ENCODE measurements at regions of chr5 and their contacts with region 1.

Region 1: DNA sequence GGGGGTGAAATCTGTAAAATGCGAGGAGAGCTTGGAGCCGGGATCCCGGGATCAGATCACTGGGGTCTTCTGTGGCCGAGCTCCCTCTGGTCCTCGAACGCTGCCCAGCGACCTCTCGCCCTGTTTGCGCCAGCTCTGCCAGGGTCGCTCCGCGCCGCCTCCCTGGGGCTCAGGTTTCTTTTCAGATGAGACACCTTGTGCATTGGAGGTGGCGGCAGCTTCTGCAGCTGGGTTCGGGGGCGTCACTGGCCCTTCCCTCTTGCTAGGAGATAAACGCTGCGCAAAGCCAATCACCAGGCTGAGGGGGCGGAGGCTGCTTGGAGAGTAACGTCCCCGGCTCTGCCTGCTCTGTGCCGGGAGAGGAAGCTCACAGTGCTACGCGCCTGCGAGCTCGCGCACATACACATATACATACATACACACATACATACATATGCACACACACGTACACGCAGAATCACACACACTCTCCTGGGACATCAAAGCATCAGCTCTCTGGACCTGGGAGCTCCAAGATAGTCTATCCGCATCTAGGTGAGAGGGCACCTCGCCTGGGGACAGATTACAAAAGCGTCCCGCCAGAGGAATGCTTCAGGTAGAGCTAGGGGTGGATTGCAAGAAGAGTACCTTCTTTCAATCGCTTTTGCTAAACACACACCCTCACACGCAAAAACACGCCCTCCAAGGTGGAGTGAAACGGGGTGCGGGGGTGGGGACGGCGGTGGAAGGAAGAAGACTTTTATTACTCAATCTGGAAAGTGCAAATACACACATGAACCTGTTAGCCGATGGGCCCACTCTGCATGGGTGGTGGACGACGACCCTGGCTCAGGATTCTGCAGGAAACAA is at the start of gene ST8SIA4:
- DNase-seq: peak; percentile 97
- H3K4me3 Mint-ChIP-seq: peak within 1 kb of the TSS; percentile 99
- H3K27ac Mint-ChIP-seq: peak within 1 kb of the TSS; percentile 99
- H3K4me1 Mint-ChIP-seq: peaks cover 52% of the 10 kb centered on the region
- H3K27me3 Mint-ChIP-seq: no peaks in the 10 kb centered on the region

Region 2: DNA sequence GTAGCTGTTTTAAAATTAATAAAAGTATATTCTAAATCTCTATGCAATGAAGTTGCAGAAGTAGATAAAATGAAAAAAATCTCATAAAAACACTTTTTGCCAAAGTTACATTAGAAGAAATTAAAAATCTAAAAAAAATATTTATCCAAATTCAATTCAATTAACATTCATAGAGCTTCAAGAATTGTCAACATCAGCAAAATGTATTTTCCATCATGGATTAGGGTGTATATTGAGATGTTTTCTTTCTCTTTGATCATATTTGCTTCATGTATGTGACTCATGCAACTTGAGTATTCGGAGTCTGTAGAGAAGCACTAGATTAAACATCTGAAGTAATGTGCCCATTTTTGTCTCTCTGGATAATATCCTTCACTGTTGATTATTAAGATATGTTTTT is 783.4 kb before region 1 on chr5:
- CTCF ChIA-PET with region 1: no interaction called
- DNase-seq: no peak
- H3K4me3 Mint-ChIP-seq: no peak overlapping the region
- H3K27ac Mint-ChIP-seq: no peak overlapping the region
- H3K4me1 Mint-ChIP-seq: no peaks in the 10 kb centered on the region
- H3K27me3 Mint-ChIP-seq: no peaks in the 10 kb centered on the region

Region 3: DNA sequence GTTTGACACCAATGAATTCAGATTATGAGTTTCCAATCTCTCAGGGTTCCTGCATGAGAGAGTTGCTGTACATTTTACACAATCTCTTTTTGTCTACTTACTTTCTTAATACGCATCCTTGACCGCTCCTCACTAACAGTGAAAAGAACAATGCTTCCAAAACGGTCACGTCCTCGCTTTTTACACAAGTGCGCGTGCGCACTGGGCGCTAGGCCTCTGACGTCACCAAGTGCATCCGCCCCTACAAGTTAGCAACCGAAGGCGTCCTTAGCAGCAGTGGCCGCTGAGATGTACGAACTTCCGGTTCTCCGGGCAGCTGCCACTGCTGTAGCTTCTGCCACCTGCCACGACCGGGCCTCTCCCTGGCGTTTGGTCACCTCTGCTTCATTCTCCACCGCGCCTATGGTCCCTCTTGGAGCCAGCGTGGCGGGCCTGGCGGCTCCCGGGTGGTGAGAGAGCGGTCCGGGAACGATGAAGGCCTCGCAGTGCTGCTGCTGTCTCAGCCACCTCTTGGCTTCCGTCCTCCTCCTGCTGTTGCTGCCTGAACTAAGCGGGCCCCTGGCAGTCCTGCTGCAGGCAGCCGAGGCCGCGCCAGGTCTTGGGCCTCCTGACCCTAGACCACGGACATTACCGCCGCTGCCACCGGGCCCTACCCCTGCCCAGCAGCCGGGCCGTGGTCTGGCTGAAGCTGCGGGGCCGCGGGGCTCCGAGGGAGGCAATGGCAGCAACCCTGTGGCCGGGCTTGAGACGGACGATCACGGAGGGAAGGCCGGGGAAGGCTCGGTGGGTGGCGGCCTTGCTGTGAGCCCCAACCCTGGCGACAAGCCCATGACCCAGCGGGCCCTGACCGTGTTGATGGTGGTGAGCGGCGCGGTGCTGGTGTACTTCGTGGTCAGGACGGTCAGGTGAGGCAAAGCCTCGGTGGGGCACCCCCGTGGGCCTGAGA is 367.9 kb before region 1 on chr5 and contains the start of gene FAM174A:
- CTCF ChIA-PET with region 1: no interaction called
- DNase-seq: peak; percentile 96
- H3K4me3 Mint-ChIP-seq: peak within 1 kb of the TSS; percentile 90
- H3K27ac Mint-ChIP-seq: peak within 1 kb of the TSS; percentile 85
- H3K4me1 Mint-ChIP-seq: peaks cover 20% of the 10 kb centered on the region
- H3K27me3 Mint-ChIP-seq: no peaks in the 10 kb centered on the region

Region 4: GRCh38 chr5:100777680-100778281 is 125.5 kb before region 1 on chr5:
- CTCF ChIA-PET with region 1: interaction called, 16 read pairs
- DNase-seq: no peak
- H3K4me3 Mint-ChIP-seq: no peak overlapping the region
- H3K27ac Mint-ChIP-seq: peak overlapping the region; percentile 75
- H3K4me1 Mint-ChIP-seq: peaks cover 39% of the 10 kb centered on the region
- H3K27me3 Mint-ChIP-seq: no peaks in the 10 kb centered on the region

Region 5: DNA sequence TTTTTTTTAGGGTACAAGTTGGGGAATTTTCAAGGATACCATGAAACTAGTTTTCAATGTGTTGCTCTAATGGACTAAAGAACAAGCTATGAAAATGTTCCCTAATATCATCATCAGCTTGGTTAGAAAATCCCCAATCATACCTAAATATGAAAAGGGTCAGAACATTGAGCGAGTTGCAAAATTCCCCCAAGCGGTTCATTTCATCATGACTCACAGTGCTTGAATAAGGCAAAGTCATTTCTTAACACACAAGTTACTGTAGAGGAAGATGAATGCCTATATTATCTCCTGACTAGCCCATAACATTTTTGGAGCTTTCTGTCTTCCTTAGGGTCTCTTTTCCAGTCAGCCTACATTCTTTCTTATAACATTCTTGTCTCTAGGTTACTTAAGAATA is 62.9 kb before region 1 on chr5:
- CTCF ChIA-PET with region 1: interaction called, 31 read pairs
- DNase-seq: no peak
- H3K4me3 Mint-ChIP-seq: no peak overlapping the region
- H3K27ac Mint-ChIP-seq: no peak overlapping the region
- H3K4me1 Mint-ChIP-seq: peaks cover 51% of the 10 kb centered on the region
- H3K27me3 Mint-ChIP-seq: no peaks in the 10 kb centered on the region

Region 6: GRCh38 chr5:100890461-100891008 is 12.7 kb before region 1 on chr5:
- CTCF ChIA-PET with region 1: interaction called, 31 read pairs
- DNase-seq: no peak
- H3K4me3 Mint-ChIP-seq: peak overlapping the region; percentile 67
- H3K27ac Mint-ChIP-seq: peak overlapping the region; percentile 85
- H3K4me1 Mint-ChIP-seq: peaks cover 67% of the 10 kb centered on the region
- H3K27me3 Mint-ChIP-seq: no peaks in the 10 kb centered on the region

Region 7: GRCh38 chr5:100939981-100940380 is 36.7 kb after region 1 on chr5:
- CTCF ChIA-PET with region 1: no interaction called
- DNase-seq: no peak
- H3K4me3 Mint-ChIP-seq: no peak overlapping the region
- H3K27ac Mint-ChIP-seq: no peak overlapping the region
- H3K4me1 Mint-ChIP-seq: no peaks in the 10 kb centered on the region
- H3K27me3 Mint-ChIP-seq: no peaks in the 10 kb centered on the region

Measured in activated naive CD4-positive, alpha-beta T cell treated with anti-CD3 and anti-CD28 coated beads, Interleukin-2, amount 10 ng/mL, durations not matched to agents 7 days and 5 days (primary cell).